ENCODE measurements at regions of chr5 and their contacts with region 1.

Region 1: GRCh38 chr5:139787568-139788293 is 7.9 kb upstream of the PSD2 start:
- DNase-seq: peak; percentile 27
- H3K4me3 ChIP-seq: peak overlapping the region; percentile 70
- H3K27ac ChIP-seq: no peak overlapping the region
- H3K27me3 ChIP-seq: peaks cover 21% of the 10 kb centered on the region
- CTCF ChIP-seq: peak; percentile 92

Region 2: GRCh38 chr5:139312075-139312474 is 475.7 kb before region 1 on chr5:
- CTCF ChIA-PET with region 1: no interaction called
- POLR2A ChIA-PET with region 1: no interaction called
- DNase-seq: no peak
- H3K4me3 ChIP-seq: no peak overlapping the region
- H3K27ac ChIP-seq: no peak overlapping the region
- H3K27me3 ChIP-seq: no peaks in the 10 kb centered on the region
- CTCF ChIP-seq: no peak

Region 3: DNA sequence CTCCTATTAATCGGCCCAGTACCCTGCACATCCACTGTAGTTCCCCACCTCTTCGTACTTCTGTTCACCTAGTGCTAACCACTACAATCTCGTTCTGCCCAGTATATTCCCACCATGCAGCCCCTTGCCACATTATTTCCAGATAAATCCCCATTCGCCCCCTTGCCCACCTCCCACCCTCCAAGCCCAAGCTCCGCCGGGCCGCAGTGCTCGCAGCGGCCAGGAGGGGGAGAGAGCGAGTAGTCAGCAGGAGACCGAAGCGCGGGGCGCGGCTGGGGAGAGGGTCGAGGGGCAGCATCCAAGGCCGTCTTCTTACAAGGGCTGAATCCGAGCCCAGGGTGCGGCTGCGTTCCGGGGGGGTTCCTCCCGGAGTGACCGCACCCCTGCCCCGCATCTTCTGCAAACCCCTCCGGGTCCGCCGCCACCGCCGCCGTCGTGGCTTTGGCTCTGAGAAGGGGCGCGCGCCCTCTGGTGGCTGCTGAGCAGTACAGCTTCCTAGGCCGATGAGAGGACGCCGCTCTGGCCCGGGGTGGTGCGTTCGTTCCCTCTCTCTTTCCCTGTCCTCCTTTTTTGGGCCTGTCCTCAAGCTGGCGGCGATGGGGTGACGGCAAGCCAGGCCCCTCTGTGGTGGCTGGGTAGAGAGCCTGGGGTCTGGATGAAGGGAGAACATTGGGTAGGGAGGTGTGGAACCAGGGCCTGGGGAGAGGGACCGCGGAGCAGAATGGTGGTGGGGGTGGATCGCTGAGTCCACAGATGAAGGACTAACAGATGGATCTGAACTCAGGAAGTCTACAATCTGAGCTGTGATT is 22.1 kb before region 1 on chr5:
- CTCF ChIA-PET with region 1: interaction called, 11 read pairs
- POLR2A ChIA-PET with region 1: no interaction called
- DNase-seq: no peak
- H3K4me3 ChIP-seq: peak overlapping the region; percentile 71
- H3K27ac ChIP-seq: no peak overlapping the region
- H3K27me3 ChIP-seq: peaks cover 19% of the 10 kb centered on the region
- CTCF ChIP-seq: peak; percentile 83

Region 4: GRCh38 chr5:139774980-139775661 is 12.6 kb before region 1 on chr5:
- CTCF ChIA-PET with region 1: interaction called, 48 read pairs
- POLR2A ChIA-PET with region 1: no interaction called
- DNase-seq: no peak
- H3K4me3 ChIP-seq: no peak overlapping the region
- H3K27ac ChIP-seq: no peak overlapping the region
- H3K27me3 ChIP-seq: peaks cover 30% of the 10 kb centered on the region
- CTCF ChIP-seq: peak; percentile 80

Region 5: DNA sequence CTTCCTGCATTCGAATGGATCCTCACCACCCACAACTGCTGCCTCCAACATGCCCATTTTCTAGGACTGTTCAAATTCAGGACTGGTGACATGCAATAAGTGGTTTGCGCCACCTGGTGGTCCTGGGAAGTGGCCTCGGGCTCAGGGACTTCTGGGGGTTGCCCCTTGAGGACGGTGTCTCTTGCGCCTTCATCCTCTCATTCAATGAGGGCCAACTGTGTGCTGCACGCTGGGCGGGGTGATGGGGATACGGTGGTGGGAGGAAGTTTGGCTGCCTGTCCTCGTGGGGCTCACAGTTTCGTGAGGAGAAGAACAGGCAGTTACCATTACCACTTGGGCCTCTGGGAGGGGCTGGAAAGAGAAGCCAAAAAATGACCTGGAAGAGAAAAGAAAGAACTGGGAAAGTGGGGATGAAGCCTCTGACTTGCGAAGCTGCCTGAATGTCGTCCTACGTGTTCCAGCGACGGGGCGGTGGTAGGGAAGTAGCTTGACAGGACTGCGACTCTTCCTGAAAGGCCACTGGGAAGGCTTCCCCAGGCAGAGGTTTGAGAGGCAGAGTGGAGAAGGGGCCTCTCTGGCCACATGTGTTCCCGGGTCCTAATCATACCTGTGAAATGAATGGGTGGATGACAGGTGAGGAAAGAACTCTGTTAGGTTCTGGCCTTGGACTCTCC is 56.9 kb after region 1 on chr5:
- CTCF ChIA-PET with region 1: interaction called, 65 read pairs
- POLR2A ChIA-PET with region 1: no interaction called
- DNase-seq: peak; percentile 11
- H3K4me3 ChIP-seq: no peak overlapping the region
- H3K27ac ChIP-seq: no peak overlapping the region
- H3K27me3 ChIP-seq: peaks cover 40% of the 10 kb centered on the region
- CTCF ChIP-seq: peak; percentile 77

Region 6: GRCh38 chr5:139863855-139864558 is 76.3 kb after region 1 on chr5:
- CTCF ChIA-PET with region 1: interaction called, 53 read pairs
- POLR2A ChIA-PET with region 1: no interaction called
- DNase-seq: peak; percentile 15
- H3K4me3 ChIP-seq: no peak overlapping the region
- H3K27ac ChIP-seq: no peak overlapping the region
- H3K27me3 ChIP-seq: peaks cover 30% of the 10 kb centered on the region
- CTCF ChIP-seq: peak; percentile 92